ENCODE measurements at regions of chr19 and their contacts with region 1.

Region 1: GRCh38 chr19:40055832-40056504 is at the start of gene ZNF780B:
- DNase-seq: peak; percentile 68
- ATAC-seq: peak; percentile 98
- H3K4me3 ChIP-seq: peak within 1 kb of the TSS; percentile 80 to 90 (median 84)
- H3K27ac ChIP-seq: peak within 1 kb of the TSS; percentile 65
- H3K4me1 ChIP-seq: peaks cover 43% of the 10 kb centered on the region
- H3K27me3 ChIP-seq: no peaks in the 10 kb centered on the region; a peak in 1 of 5 replicates
- CTCF ChIP-seq: no peak
- EP300 ChIP-seq: peak in 1 of 2 experiments; percentile 15; a peak in 1 of 4 replicates
- POLR2A ChIP-seq: peak; percentile 41 to 80
- RAD21 ChIP-seq: no peak; the same call in 1 of the 2 replicates
- total RNA-seq, gene ZNF780B: 21.9 and 25.0 TPM in 2 replicates

Region 2: GRCh38 chr19:39996811-39997594 is 59.0 kb before region 1 on chr19 and contains the start of gene ZNF546:
- CTCF ChIA-PET with region 1: no interaction called
- POLR2A ChIA-PET with region 1: no interaction called
- in situ Hi-C with region 1: no loop called
- intact Hi-C with region 1: loop called (anchors 2 kb)
- DNase-seq: peak; percentile 76
- ATAC-seq: peak; percentile 97
- H3K4me3 ChIP-seq: peak within 1 kb of the TSS; percentile 79 to 93 (median 81)
- H3K27ac ChIP-seq: peak within 1 kb of the TSS; percentile 78
- H3K4me1 ChIP-seq: peaks cover 23% of the 10 kb centered on the region
- H3K27me3 ChIP-seq: no peaks in the 10 kb centered on the region; a peak in 1 of 5 replicates
- CTCF ChIP-seq: no peak
- EP300 ChIP-seq: no peak
- POLR2A ChIP-seq: peak; percentile 58 to 89
- RAD21 ChIP-seq: 0 out of 2 replicates have a peak, but pooled peaks have one; percentile 31
- total RNA-seq, gene ZNF546: 4.1 and 6.0 TPM in 2 replicates

Region 3: GRCh38 chr19:40090241-40091204 is 34.6 kb after region 1 on chr19 and contains the start of gene ZNF780A:
- CTCF ChIA-PET with region 1: no interaction called
- POLR2A ChIA-PET with region 1: interaction called, 15 read pairs
- in situ Hi-C with region 1: no loop called
- intact Hi-C with region 1: loop called (anchors 5 kb)
- DNase-seq: peak; percentile 82
- ATAC-seq: peak; percentile 95
- H3K4me3 ChIP-seq: peak within 1 kb of the TSS; percentile 70 to 90 (median 82)
- H3K27ac ChIP-seq: peak within 1 kb of the TSS; percentile 90
- H3K4me1 ChIP-seq: peaks cover 38% of the 10 kb centered on the region
- H3K27me3 ChIP-seq: no peaks in the 10 kb centered on the region; a peak in 1 of 5 replicates
- CTCF ChIP-seq: no peak
- EP300 ChIP-seq: no peak
- POLR2A ChIP-seq: peak; percentile 54 to 86; a peak in 3 of 4 replicates
- RAD21 ChIP-seq: no peak
- total RNA-seq, gene ZNF780A: 22.7 and 22.9 TPM in 2 replicates

Measured in HepG2 (cell line).